ENCODE measurements at regions of chr5 and their contacts with region 1.

Region 1: DNA sequence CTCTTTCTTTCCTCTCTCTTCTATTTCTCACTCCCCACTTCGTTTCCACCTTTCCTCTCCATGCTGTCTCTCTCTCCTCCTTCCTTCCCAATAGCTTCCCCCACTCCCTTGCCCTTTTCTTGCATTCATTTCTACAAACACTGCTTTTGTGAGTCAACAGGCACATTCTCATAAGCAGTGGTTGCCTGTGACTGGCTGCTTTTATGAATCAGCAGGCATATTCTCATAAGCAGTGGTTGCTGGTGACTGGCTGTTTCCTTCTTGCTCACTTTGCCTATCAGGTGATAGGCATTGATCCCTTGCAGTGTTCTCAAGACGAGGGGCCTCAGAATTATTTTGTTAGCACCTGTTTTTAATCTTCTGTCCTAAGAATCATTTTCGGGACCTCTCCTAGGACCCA is 116.1 kb upstream of the ACTBL2 start:
- DNase-seq: peak; percentile 67
- ATAC-seq: peak; percentile 95
- H3K4me3 Mint-ChIP-seq: no peak overlapping the region
- H3K27ac Mint-ChIP-seq: no peak overlapping the region
- H3K4me1 Mint-ChIP-seq: peaks cover 21% of the 10 kb centered on the region
- H3K27me3 Mint-ChIP-seq: peaks cover 12% of the 10 kb centered on the region

Region 2: GRCh38 chr5:57383093-57383861 is 215.5 kb before region 1 on chr5:
- CTCF ChIA-PET with region 1: no interaction called
- POLR2A ChIA-PET with region 1: no interaction called
- intact Hi-C with region 1: loop called in 1 of 2 experiments (anchors 1 kb)
- DNase-seq: peak; percentile 72
- ATAC-seq: peak; percentile 97
- H3K4me3 Mint-ChIP-seq: no peak overlapping the region
- H3K27ac Mint-ChIP-seq: peak overlapping the region; percentile 4
- H3K4me1 Mint-ChIP-seq: peaks cover 17% of the 10 kb centered on the region
- H3K27me3 Mint-ChIP-seq: peaks cover 1% of the 10 kb centered on the region

Region 3: GRCh38 chr5:57772512-57772911 is 173.8 kb after region 1 on chr5:
- CTCF ChIA-PET with region 1: no interaction called
- POLR2A ChIA-PET with region 1: no interaction called
- intact Hi-C with region 1: loop called in 1 of 2 experiments (anchors 5 kb)
- DNase-seq: no peak
- ATAC-seq: no peak
- H3K4me3 Mint-ChIP-seq: no peak overlapping the region
- H3K27ac Mint-ChIP-seq: no peak overlapping the region
- H3K4me1 Mint-ChIP-seq: peaks cover 4% of the 10 kb centered on the region
- H3K27me3 Mint-ChIP-seq: peaks cover 7% of the 10 kb centered on the region

Measured in activated CD4-positive, alpha-beta T cell treated with anti-CD3 and anti-CD28 coated beads for 36 hours (primary cell).